ENCODE measurements at regions of chr2 and their contacts with region 1.

Region 1: DNA sequence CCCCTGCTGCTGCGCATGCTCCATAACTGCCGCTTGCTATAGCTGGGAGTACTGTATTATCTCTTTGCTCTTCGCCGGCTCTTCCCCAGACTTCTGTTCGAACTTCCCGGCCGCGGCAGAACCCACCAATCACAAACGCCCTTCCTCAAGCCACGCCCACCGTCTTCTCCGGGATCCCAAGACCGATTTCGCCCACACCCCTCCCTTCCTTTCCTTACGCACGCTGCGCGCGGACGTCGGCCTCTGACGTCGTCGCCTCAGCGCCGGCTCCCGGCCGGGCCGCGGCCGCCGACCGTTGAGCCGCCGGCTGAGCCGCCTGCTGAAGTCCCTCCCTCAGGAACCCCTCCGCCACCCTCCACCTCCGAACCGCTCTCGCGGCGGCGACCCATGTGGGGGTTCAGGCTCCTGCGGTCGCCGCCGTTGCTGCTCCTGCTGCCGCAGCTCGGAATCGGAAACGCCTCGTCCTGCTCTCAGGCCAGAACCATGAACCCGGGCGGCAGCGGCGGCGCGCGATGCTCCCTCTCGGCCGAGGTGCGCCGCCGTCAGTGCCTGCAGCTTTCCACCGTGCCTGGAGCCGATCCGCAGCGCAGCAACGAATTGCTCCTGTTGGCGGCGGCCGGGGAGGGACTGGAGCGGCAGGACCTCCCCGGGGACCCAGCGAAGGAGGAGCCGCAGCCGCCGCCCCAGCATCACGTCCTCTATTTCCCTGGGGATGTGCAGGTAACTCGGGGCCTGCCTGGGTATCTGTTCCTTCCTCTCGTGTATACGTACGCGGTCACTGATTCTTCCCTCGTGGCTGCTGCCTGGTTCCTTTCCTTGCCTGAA is at the start of gene C2orf69:
- DNase-seq: peak; percentile 91
- H3K4me3 Mint-ChIP-seq: peak within 1 kb of the TSS; percentile 92
- H3K27ac Mint-ChIP-seq: peak within 1 kb of the TSS; percentile 96
- H3K4me1 Mint-ChIP-seq: peaks cover 23% of the 10 kb centered on the region
- H3K27me3 Mint-ChIP-seq: peaks cover 6% of the 10 kb centered on the region
- total RNA-seq, gene C2orf69: 16.8 and 17.6 TPM in 2 replicates

Region 2: GRCh38 chr2:199543606-199544172 is 367.6 kb before region 1 on chr2:
- intact Hi-C with region 1: no loop called
- DNase-seq: no peak
- H3K4me3 Mint-ChIP-seq: no peak overlapping the region
- H3K27ac Mint-ChIP-seq: no peak overlapping the region
- H3K4me1 Mint-ChIP-seq: no peaks in the 10 kb centered on the region
- H3K27me3 Mint-ChIP-seq: no peaks in the 10 kb centered on the region

Region 3: GRCh38 chr2:199850718-199851500 is 60.4 kb before region 1 on chr2 and contains the start of gene FTCDNL1:
- intact Hi-C with region 1: loop called (anchors 1 kb)
- DNase-seq: peak; percentile 69
- H3K4me3 Mint-ChIP-seq: peak within 1 kb of the TSS; percentile 94
- H3K27ac Mint-ChIP-seq: peak within 1 kb of the TSS; percentile 88
- H3K4me1 Mint-ChIP-seq: peaks cover 4% of the 10 kb centered on the region
- H3K27me3 Mint-ChIP-seq: peaks cover 21% of the 10 kb centered on the region
- total RNA-seq, gene FTCDNL1: 1.7 and 2.6 TPM in 2 replicates

Region 4: GRCh38 chr2:199955339-199956261 is 44.3 kb after region 1 on chr2 and contains the starts of genes MAIP1 and TYW5:
- intact Hi-C with region 1: loop called (anchors 1 kb)
- DNase-seq: peak; percentile 73
- H3K4me3 Mint-ChIP-seq: peak within 1 kb of the TSS; percentile 93
- H3K27ac Mint-ChIP-seq: peak within 1 kb of the TSS; percentile 79
- H3K4me1 Mint-ChIP-seq: peaks cover 43% of the 10 kb centered on the region
- H3K27me3 Mint-ChIP-seq: no peaks in the 10 kb centered on the region
- total RNA-seq, gene MAIP1: 26.0 and 29.9 TPM in 2 replicates
- total RNA-seq, gene TYW5: 11.0 and 12.3 TPM in 2 replicates

Measured in activated T-helper 2 cell treated with anti-CD3 and anti-CD28 coated beads, Interferon-gamma antibody, Interleukin-2, Interleukin-4, amounts not matched to agents 10 μg/mL and 5 μg/mL and 100 μg/mL, durations not matched to agents 14 hours and 24 hours and 36 hours (primary cell).